Ascending aorta (tissue), 2 donors: ENCODE measurements at regions of chr1 and their contacts with region 1.

Region 1: DNA sequence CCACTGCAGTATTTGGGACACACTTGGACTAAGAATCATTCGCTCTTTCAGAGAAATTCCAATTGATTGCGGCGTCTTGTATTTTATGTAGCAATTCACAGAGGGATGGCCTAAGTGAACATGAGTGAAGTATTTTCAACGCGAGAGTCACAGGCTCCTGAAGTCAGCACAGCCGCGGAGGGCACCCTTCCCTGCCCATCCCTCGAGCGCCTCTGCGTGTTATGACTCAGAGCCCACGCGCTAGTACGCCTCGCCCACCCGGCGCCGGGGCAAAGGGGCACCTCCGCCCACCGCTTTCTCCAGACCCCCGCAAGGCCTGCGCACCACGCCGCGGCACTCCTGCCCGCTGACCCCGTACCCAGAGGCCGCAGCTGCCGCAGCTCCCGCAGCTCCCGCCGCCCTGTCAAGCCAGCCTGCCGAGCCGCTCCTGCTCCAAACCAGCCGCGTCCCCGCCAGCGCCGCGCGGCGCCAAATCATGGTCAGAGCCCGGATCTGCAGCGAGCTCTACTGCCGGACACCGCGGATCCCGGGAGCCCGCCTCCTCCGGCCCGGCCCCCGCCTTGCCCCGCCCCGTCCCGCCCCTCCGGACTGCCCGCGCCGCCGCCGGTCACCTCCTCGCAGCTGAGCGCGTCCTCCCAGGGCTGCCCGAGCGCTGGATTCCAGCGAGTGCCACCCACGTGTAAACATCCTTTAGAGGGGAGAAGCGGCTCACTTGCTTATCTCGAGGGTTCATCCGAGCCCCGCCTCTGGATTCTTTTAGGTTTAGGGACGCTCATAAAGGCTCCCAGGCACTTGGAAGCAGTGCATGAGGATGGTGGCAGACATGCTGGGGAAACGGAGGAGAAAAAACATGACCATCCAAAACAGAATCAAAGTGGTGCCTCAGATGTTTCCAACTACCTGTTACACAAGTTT is at the start of gene GLRX2:
- DNase-seq: peak; percentile 39 to 92
- H3K4me3 ChIP-seq: peak within 1 kb of the TSS; percentile 93 to 98
- H3K27ac ChIP-seq: peak within 1 kb of the TSS; percentile 94 to 97
- H3K4me1 ChIP-seq: peaks cover 2 to 19% of the 10 kb centered on the region in 2 donors
- H3K27me3 ChIP-seq: no peaks in the 10 kb centered on the region
- CTCF ChIP-seq: no peak
- total RNA-seq, gene GLRX2: 2.8 TPM

Region 2: GRCh38 chr1:192974701-192975100 is 130.5 kb before region 1 on chr1:
- intact Hi-C with region 1: no loop called
- DNase-seq: no peak
- H3K4me3 ChIP-seq: no peak overlapping the region
- H3K27ac ChIP-seq: no peak overlapping the region
- H3K4me1 ChIP-seq: no peaks in the 10 kb centered on the region
- H3K27me3 ChIP-seq: no peaks in the 10 kb centered on the region
- CTCF ChIP-seq: no peak

Region 3: GRCh38 chr1:193059268-193060225 is 45.6 kb before region 1 on chr1 and contains the starts of genes RO60 and UCHL5:
- intact Hi-C with region 1: loop called (anchors 1 kb)
- DNase-seq: peak; percentile 95 to 98
- H3K4me3 ChIP-seq: peak within 1 kb of the TSS; percentile 77 to 83
- H3K27ac ChIP-seq: peak within 1 kb of the TSS; percentile 96
- H3K4me1 ChIP-seq: peaks cover 3 to 26% of the 10 kb centered on the region in 2 donors
- H3K27me3 ChIP-seq: no peaks in the 10 kb centered on the region
- CTCF ChIP-seq: no peak
- total RNA-seq, gene RO60: 56.2 TPM
- total RNA-seq, gene UCHL5: 4.2 TPM

Region 4: GRCh38 chr1:193131266-193131860 is 26.2 kb after region 1 on chr1:
- intact Hi-C with region 1: no loop called
- DNase-seq: no peak
- H3K4me3 ChIP-seq: no peak overlapping the region
- H3K27ac ChIP-seq: no peak overlapping the region
- H3K4me1 ChIP-seq: no peaks in the 10 kb centered on the region
- H3K27me3 ChIP-seq: no peaks in the 10 kb centered on the region
- CTCF ChIP-seq: no peak